ENCODE measurements at regions of chr4 and their contacts with region 1.

Region 1: GRCh38 chr4:159206427-159206871 is 103.6 kb downstream of the RAPGEF2 start:
- DNase-seq: peak in 1 of 9 experiments; percentile 41
- ATAC-seq: peak; percentile 36
- H3K4me3 ChIP-seq: no peak overlapping the region
- H3K4me3 Mint-ChIP-seq: no peak overlapping the region
- H3K27ac ChIP-seq: no peak overlapping the region
- H3K27ac Mint-ChIP-seq: no peak overlapping the region
- H3K4me1 ChIP-seq: no peaks in the 10 kb centered on the region
- H3K4me1 Mint-ChIP-seq: peaks cover 18% of the 10 kb centered on the region
- H3K27me3 ChIP-seq: no peaks in the 10 kb centered on the region
- H3K27me3 Mint-ChIP-seq: no peaks in the 10 kb centered on the region
- CTCF ChIP-seq: no peak

Region 2: GRCh38 chr4:158856852-158857251 is 349.6 kb before region 1 on chr4:
- CTCF ChIA-PET with region 1: interaction called, 9 read pairs
- POLR2A ChIA-PET with region 1: no interaction called
- intact Hi-C with region 1: loop called (anchors 1 to 2 kb)
- DNase-seq: peak in 2 of 9 experiments; percentile 49 to 56
- ATAC-seq: peak; percentile 64
- H3K4me3 ChIP-seq: no peak overlapping the region
- H3K4me3 Mint-ChIP-seq: no peak overlapping the region
- H3K27ac ChIP-seq: no peak overlapping the region
- H3K27ac Mint-ChIP-seq: no peak overlapping the region
- H3K4me1 ChIP-seq: no peaks in the 10 kb centered on the region
- H3K4me1 Mint-ChIP-seq: no peaks in the 10 kb centered on the region
- H3K27me3 ChIP-seq: no peaks in the 10 kb centered on the region
- H3K27me3 Mint-ChIP-seq: no peaks in the 10 kb centered on the region
- CTCF ChIP-seq: peak; percentile 40

Region 3: GRCh38 chr4:159191989-159192388 is 14.5 kb before region 1 on chr4:
- CTCF ChIA-PET with region 1: interaction called, 11 read pairs
- POLR2A ChIA-PET with region 1: no interaction called
- intact Hi-C with region 1: no loop called
- DNase-seq: no peak
- ATAC-seq: no peak
- H3K4me3 ChIP-seq: no peak overlapping the region
- H3K4me3 Mint-ChIP-seq: no peak overlapping the region
- H3K27ac ChIP-seq: no peak overlapping the region
- H3K27ac Mint-ChIP-seq: no peak overlapping the region
- H3K4me1 ChIP-seq: no peaks in the 10 kb centered on the region
- H3K4me1 Mint-ChIP-seq: no peaks in the 10 kb centered on the region
- H3K27me3 ChIP-seq: no peaks in the 10 kb centered on the region
- H3K27me3 Mint-ChIP-seq: no peaks in the 10 kb centered on the region
- CTCF ChIP-seq: no peak

Region 4: DNA sequence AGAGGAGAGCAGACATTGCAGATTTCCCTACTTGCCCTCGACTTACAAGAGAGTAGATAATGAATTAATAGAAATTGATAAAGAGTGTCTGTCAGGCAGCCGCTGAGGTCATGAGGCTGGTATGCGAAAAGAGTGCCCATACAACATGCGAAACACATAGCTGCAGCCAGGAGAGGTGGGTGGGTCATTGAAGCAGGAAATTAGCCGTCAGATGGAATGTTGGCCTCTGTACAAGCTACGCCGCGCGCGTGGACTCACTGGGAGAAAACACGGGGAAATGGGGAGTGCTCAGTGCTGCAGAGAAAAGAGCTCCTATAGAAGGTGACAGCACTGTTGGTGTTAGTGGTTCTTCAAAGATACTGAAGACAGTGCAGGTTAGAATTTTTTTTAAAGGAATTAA is 21.5 kb after region 1 on chr4:
- CTCF ChIA-PET with region 1: no interaction called
- POLR2A ChIA-PET with region 1: no interaction called
- intact Hi-C with region 1: no loop called
- DNase-seq: no peak
- ATAC-seq: no peak
- H3K4me3 ChIP-seq: no peak overlapping the region
- H3K4me3 Mint-ChIP-seq: no peak overlapping the region
- H3K27ac ChIP-seq: no peak overlapping the region
- H3K27ac Mint-ChIP-seq: no peak overlapping the region
- H3K4me1 ChIP-seq: no peaks in the 10 kb centered on the region
- H3K4me1 Mint-ChIP-seq: peaks cover 11% of the 10 kb centered on the region
- H3K27me3 ChIP-seq: no peaks in the 10 kb centered on the region
- H3K27me3 Mint-ChIP-seq: no peaks in the 10 kb centered on the region
- CTCF ChIP-seq: no peak

Region 5: DNA sequence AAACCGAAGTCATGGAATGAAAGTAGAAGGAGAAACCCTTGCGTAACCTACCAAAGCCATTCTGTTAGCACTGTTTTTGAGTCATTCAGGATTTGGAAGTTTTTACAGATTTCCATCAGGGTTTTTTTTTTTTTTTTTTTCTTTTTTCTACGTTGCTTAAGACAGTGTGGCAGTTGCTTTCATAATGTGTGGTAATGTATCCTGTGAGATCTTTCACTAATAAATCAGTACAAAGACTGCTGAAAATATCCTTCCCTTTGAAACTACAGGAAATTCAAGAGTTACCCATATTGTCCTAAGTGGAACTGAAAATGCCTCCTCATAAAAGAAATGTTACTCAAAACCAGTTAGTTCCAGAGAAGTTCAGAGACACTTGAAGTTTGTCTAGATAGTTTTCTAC is 34.2 kb after region 1 on chr4:
- CTCF ChIA-PET with region 1: no interaction called
- POLR2A ChIA-PET with region 1: no interaction called
- intact Hi-C with region 1: no loop called
- DNase-seq: peak in 1 of 9 experiments; percentile 10
- ATAC-seq: no peak
- H3K4me3 ChIP-seq: no peak overlapping the region
- H3K4me3 Mint-ChIP-seq: no peak overlapping the region
- H3K27ac ChIP-seq: no peak overlapping the region
- H3K27ac Mint-ChIP-seq: no peak overlapping the region
- H3K4me1 ChIP-seq: no peaks in the 10 kb centered on the region
- H3K4me1 Mint-ChIP-seq: peaks cover 7% of the 10 kb centered on the region
- H3K27me3 ChIP-seq: no peaks in the 10 kb centered on the region
- H3K27me3 Mint-ChIP-seq: no peaks in the 10 kb centered on the region
- CTCF ChIP-seq: no peak